Aorta (tissue), 5 donors: ENCODE measurements at regions of chr22 and their contacts with region 1.

Region 1: DNA sequence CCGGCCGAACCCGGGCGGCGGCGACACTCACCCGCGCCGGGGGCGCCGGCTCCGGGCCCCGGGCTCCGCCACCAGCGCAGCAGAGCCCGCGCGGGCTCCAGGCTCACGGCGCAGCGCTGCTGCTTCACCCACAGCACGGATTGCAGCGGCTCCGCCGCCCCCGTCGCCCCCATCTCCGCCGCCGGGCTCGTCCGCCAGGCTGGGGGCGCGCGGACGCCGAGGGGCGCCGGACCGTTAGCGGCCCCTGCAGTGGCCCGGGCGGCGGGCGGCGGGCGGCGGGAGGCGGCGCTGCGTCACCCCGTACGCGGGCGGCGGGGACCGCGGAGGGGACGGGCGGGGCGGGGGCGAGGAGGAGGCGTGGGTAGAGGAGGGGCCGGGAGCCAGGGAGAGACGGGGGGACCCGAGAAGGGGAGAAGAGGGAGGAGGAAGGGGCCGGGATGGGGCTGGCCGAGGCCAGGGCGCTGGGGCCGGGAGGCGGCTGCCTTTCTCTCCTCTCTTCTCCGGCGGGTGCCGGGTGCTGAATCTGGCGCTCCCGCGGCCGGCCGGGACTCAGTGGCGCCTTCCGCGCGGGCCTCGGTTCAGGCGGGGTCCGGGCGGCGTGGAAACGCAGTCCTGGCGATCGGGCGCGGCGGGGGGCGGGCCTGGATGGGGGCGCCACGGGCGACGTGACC is at the start of gene CERK:
- DNase-seq: peak; percentile 89 to 92
- ATAC-seq: peak; percentile 87
- H3K4me3 ChIP-seq: peak within 1 kb of the TSS; percentile 90 to 95
- H3K27ac ChIP-seq: peak within 1 kb of the TSS; percentile 43 to 50
- H3K4me1 ChIP-seq: no peaks in the 10 kb centered on the region
- H3K27me3 ChIP-seq: no peaks in the 10 kb centered on the region
- total RNA-seq, gene CERK: 33.8 to 38.1 TPM

Region 2: GRCh38 chr22:46576556-46577367 is 161.3 kb before region 1 on chr22:
- intact Hi-C with region 1: loop called in 1 of 2 experiments (anchors 10 kb)
- DNase-seq: peak; percentile 68 to 82
- ATAC-seq: peak; percentile 37
- H3K4me3 ChIP-seq: peak overlapping the region; percentile 77 to 78
- H3K27ac ChIP-seq: no peak overlapping the region
- H3K4me1 ChIP-seq: no peaks in the 10 kb centered on the region
- H3K27me3 ChIP-seq: no peaks in the 10 kb centered on the region

Region 3: DNA sequence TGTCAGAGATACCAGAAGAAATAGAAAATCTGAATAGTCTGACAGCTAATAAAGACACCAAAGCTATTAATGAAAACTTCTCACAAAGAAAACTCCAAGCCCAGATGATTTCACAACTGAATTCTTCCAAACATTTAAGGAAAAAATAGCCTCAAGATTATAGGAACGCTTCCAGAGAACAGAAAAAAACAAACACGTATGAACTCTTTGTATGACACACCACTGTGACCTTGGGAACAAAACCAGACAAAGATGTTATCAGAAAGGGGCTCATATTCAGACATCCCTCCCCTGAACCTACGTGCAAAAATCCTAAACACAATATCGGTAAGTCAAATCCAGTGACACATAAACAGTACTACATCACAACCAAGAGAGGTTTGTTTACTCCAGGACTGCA is 23.6 kb before region 1 on chr22:
- intact Hi-C with region 1: no loop called
- DNase-seq: no peak
- ATAC-seq: no peak
- H3K4me3 ChIP-seq: no peak overlapping the region
- H3K27ac ChIP-seq: no peak overlapping the region
- H3K4me1 ChIP-seq: no peaks in the 10 kb centered on the region
- H3K27me3 ChIP-seq: no peaks in the 10 kb centered on the region

Region 4: GRCh38 chr22:46754110-46754799 is 16.1 kb after region 1 on chr22:
- intact Hi-C with region 1: loop called in 1 of 2 experiments (anchors 2 kb)
- DNase-seq: peak; percentile 98
- ATAC-seq: peak; percentile 93
- H3K4me3 ChIP-seq: no peak overlapping the region
- H3K27ac ChIP-seq: peak overlapping the region; percentile 97
- H3K4me1 ChIP-seq: peaks cover 0 to 3% of the 10 kb centered on the region in 2 donors
- H3K27me3 ChIP-seq: no peaks in the 10 kb centered on the region

Region 5: GRCh38 chr22:46762238-46763050 is 24.3 kb after region 1 on chr22 and contains the start of gene TBC1D22A:
- intact Hi-C with region 1: loop called in 1 of 2 experiments (anchors 2 kb)
- DNase-seq: peak; percentile 97 to 98
- ATAC-seq: peak; percentile 97
- H3K4me3 ChIP-seq: peak within 1 kb of the TSS; percentile 79 to 82
- H3K27ac ChIP-seq: peak within 1 kb of the TSS; percentile 72 to 74
- H3K4me1 ChIP-seq: peaks cover 0 to 3% of the 10 kb centered on the region in 2 donors
- H3K27me3 ChIP-seq: no peaks in the 10 kb centered on the region
- total RNA-seq, gene TBC1D22A: 21.1 to 37.1 TPM